ENCODE measurements at regions of chr5 and their contacts with region 1.

Region 1: DNA sequence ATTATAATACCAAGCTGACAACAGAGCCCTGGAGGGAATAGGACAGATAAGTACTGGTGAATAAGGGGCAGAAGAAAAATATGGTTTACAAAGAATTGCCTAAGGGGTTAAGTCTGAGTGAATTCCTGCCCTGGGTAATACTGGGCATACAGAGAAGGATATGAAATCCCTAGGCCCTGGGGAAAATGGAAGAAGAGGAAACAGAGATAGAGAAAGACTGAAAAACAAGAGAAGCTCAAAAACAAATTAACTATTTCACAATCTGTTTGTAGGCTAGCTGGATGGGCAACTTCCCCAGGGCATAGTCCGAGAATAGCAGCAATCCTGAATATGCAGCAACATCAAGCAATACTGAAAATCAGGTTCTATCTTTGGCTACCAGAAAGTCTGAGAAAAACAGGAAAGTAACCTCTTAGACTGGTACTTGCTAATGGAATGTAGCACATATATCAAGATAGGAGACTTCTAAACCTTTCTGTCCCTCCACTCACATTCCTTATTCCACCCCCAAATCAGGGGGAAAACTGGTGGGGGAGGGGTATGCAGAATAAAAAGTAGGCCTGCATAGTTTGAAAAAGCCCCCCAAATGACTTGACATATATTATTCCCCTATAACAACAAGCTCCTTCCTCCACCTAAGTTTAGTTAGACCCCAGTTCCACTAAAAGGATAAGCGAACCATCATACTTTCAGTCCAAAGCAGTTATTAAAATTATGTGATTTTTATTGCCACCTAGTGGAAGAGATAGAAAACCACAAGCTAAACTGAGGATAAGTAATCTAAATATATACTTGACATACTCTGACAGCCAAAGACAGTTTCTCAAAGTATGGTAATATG is 20.6 kb downstream of the SLC38A9 start:
- DNase-seq: peak in 1 of 2 experiments; percentile 51
- H3K4me3 ChIP-seq: no peak overlapping the region
- H3K27ac ChIP-seq: no peak overlapping the region
- H3K4me1 ChIP-seq: no peaks in the 10 kb centered on the region
- H3K27me3 ChIP-seq: no peaks in the 10 kb centered on the region
- CTCF ChIP-seq: peak; percentile 80

Region 2: DNA sequence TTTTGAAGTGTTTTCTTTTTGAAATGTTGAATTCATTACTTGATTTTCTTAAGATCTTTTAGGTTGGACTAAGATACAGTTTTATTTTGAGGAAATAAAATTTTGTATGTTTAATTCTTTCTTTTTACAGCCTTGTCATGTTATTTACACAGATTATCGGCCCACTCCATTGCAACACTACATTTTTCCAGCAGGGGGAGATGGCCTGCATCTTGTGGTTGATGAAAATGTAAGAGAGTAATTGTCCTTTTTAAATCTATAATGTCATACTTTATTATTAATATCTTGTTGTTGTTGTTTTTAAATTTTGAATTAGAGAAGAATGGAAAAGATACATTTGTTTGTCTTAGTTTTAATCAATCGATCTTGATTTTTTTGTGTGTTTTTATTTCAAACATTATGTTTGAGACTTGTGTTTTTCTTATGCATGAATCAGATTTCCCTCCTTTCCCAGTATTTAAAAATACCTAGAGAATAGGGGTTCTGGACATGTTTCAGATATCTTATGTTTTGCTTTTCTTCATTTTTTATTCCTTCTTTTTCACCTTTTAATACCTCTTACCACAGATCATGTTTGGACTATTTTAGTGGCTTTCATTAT is 347.0 kb before region 1 on chr5:
- CTCF ChIA-PET with region 1: no interaction called
- POLR2A ChIA-PET with region 1: no interaction called
- intact Hi-C with region 1: loop called (anchors 1 kb)
- DNase-seq: peak; percentile 45 to 51
- H3K4me3 ChIP-seq: no peak overlapping the region
- H3K27ac ChIP-seq: 0 out of 2 replicates have a peak overlapping the region, but pooled peaks have one; percentile 1
- H3K4me1 ChIP-seq: no peaks in the 10 kb centered on the region
- H3K27me3 ChIP-seq: no peaks in the 10 kb centered on the region
- CTCF ChIP-seq: peak; percentile 90

Region 3: GRCh38 chr5:55407059-55407684 is 284.3 kb before region 1 on chr5:
- CTCF ChIA-PET with region 1: interaction called, 3 read pairs
- POLR2A ChIA-PET with region 1: no interaction called
- intact Hi-C with region 1: loop called (anchors 1 kb)
- DNase-seq: peak in 1 of 2 experiments; percentile 14
- H3K4me3 ChIP-seq: no peak overlapping the region
- H3K27ac ChIP-seq: no peak overlapping the region
- H3K4me1 ChIP-seq: 0 out of 2 replicates have a peak, but pooled peaks cover 6% of the 10 kb centered on the region
- H3K27me3 ChIP-seq: no peaks in the 10 kb centered on the region
- CTCF ChIP-seq: peak; percentile 71

Region 4: DNA sequence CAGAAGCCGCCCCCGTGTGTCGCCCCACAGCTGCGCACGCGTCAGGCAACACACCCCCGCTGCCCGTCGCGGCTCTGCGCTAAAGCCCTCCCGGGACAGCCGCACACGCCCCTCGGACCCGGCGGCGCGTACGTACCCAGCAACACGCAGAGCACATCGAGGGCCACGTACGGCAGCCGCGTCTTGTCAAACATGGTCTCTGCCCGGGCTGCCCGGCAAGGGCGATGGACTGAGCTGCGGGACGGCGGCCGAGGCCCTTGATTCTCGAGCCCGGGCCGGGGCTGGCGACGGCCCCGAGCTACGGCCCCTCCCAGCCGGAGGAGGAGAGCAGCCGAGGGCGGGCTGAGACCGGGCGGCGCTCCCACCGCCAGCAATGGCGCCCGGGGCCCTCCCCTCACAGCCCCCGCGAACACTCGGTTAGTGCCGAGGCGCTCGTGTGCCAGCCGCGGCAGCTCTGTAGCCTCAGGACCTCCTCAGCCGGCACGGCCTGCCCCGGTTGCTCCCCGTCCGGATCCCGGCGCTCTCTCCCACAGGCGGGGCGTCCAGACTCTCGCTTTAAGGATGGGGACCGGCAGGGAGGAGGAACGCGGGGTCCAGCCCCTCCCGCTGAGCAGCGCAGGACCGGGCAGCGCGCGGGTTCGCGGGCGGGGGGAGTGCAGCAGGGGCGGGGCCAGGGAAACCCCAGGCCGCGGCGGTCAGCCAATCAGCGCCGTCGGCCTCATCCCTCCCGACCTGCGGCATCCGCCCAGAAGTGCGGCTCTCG is 156.9 kb before region 1 on chr5 and contains the start of gene PLPP1:
- CTCF ChIA-PET with region 1: no interaction called
- POLR2A ChIA-PET with region 1: no interaction called
- intact Hi-C with region 1: loop called (anchors 5 kb)
- DNase-seq: peak; percentile 72 to 92
- H3K4me3 ChIP-seq: peak within 1 kb of the TSS; percentile 95
- H3K27ac ChIP-seq: peak within 1 kb of the TSS; percentile 45
- H3K4me1 ChIP-seq: peaks cover 14% of the 10 kb centered on the region; the same call in 1 of the 2 replicates
- H3K27me3 ChIP-seq: no peaks in the 10 kb centered on the region
- CTCF ChIP-seq: no peak
- total RNA-seq, gene PLPP1: 12.2 and 18.4 TPM in 2 replicates

Region 5: DNA sequence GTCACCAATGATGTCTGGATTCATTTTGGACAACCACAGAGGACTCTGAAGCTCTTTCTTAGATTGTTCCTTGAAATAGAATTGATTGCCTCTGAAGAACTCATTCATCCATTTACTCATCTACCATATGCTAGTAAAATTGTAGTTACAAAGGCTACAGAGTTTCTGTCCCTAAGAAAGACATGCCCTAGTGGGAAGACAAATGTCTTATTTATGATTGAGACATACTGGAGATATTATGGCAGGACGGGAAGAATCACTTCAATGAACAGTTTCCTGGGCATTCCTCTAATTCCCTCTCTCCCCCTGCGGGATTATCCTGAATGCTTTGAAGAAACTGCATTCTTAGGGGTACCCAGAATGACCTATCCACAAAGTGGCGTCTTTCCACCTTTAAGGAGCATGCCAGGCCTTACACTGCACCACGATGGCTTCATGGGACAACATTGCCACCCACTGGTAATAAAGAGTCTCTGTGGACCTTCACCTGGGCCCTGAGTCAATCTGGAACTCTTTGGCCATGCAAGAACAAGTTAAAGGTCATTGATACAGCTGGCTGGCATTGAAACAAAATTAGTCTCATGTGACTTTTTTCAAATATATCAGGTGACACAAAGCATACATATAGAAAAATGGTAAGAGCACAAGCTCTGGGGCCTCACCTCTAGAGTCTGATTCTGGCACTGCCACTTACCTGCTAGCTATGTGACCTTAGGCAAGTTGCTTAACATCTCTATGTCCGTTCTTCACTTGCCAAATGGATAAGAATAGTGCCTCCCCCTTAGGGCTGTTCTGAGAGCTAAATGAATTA is 509.6 kb after region 1 on chr5:
- CTCF ChIA-PET with region 1: no interaction called
- POLR2A ChIA-PET with region 1: no interaction called
- intact Hi-C with region 1: loop called (anchors 10 kb)
- DNase-seq: peak; percentile 58 to 74
- H3K4me3 ChIP-seq: no peak overlapping the region
- H3K27ac ChIP-seq: no peak overlapping the region
- H3K4me1 ChIP-seq: peaks cover 16% of the 10 kb centered on the region
- H3K27me3 ChIP-seq: no peaks in the 10 kb centered on the region
- CTCF ChIP-seq: peak; percentile 88

Measured in PC-9 (cell line).